Cardiac septum (tissue), 1 donor: ENCODE measurements at regions of chr5 and their contacts with region 1.

Region 1: DNA sequence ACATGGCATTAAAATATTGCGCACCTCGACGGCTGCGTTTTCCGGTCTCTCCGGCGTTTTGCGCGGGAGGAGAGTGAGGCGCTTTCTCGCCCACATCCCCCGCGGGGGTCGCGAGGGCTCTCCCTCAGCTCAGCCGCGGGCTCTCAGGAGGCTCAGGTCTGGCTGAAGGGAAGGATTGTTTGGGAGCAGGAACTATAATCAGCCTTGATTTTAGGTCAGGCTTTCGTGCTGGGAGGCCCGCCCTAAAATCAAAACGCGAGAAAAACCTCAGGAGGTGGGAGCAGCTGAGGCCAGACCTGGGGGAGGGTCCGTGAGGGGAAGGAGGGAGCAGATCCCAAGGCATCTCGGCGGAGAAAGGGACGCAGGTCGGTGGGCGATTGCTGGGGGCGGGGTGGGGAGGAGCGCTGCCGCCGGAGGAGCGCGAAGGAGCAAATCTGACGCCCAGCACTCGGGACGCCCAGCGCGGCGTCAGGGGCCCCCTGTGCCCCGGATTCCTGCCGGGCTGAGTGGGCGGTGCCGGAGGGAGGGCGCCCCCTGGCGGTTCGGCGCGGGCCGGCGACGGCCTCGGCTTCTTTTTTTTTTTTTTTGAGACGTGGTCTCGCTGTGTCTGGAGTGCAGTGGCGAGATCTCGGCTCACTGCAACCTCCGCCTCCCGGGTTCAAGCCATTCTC is 18.7 kb upstream of the RNF130 start:
- DNase-seq: peak; percentile 85

Region 2: DNA sequence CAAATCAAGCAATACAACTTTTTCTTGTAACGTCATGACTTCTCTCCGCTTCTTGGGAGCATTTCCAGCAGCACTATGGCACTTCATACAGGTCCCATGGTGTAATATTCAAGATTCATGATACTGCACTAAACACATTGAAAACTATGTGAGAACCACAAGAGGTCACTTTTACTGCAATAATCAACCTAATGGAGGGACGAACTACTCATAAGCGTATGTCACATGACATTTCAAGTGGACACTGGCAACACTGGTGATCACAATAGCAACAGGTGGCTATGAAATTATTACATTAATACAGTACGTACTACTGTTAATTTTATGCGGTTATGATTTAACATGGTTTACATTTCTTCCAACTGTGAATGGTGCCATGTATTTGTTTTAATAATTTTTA is 103.9 kb before region 1 on chr5:
- intact Hi-C with region 1: loop called (anchors 10 kb)
- DNase-seq: no peak